Tibial artery (tissue), 4 donors: ENCODE measurements at regions of chr7 and their contacts with region 1.

Region 1: DNA sequence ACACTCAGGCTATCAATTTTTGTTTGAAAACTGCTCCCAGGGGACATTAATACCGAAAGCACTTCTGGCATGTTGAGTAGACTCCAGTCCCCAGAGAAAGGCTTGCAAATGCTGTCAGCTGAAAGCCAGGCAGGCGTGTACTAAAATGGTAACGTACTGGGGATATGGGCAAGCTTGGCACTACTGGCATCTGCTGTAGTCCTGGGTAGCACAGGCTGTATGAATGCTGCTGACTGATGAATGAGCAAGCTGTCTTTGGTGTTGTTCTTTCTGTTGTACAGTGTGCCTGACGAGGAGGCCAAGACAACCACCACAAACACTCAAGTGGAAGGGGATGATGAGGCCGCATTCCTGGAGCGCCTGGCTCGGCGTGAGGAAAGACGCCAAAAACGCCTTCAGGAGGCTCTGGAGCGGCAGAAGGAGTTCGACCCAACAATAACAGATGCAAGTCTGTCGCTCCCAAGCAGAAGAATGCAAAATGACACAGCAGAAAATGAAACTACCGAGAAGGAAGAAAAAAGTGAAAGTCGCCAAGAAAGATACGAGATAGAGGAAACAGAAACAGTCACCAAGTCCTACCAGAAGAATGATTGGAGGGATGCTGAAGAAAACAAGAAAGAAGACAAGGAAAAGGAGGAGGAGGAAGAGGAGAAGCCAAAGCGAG is 53.5 kb upstream of the AGBL3 start:
- DNase-seq: peak; percentile 51 to 91
- H3K4me3 ChIP-seq: peak overlapping the region; percentile 28 to 35
- H3K27ac ChIP-seq: peak overlapping the region; percentile 80
- H3K4me1 ChIP-seq: peaks cover 0 to 86% (median 35%) of the 10 kb centered on the region in 4 donors
- H3K27me3 ChIP-seq: no peaks in the 10 kb centered on the region
- CTCF ChIP-seq: no peak

Region 2: DNA sequence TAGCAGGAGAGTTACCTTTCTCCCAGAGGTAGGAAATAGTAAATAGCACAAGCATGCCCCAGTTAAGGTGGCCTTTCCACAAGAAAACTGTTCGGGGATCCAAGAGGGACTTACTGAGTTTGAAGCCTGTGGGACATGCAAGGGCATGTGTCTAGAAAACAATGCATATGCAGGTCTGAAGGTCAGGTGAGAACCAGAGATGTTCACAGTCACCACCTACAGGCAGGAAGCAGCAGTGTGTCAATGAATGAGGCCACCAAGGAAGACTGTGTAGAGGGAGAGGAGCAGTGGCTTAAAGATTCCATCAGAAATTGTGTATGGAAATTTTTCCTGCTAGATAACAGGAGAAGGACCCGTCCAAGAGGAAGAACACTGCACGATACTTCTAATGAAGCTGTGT is 87.4 kb before region 1 on chr7:
- intact Hi-C with region 1: loop called (anchors 10 kb)
- DNase-seq: no peak
- H3K4me3 ChIP-seq: no peak overlapping the region
- H3K27ac ChIP-seq: peak overlapping the region; percentile 83 to 89
- H3K4me1 ChIP-seq: peaks cover 0 to 100% (median 66%) of the 10 kb centered on the region in 4 donors
- H3K27me3 ChIP-seq: no peaks in the 10 kb centered on the region
- CTCF ChIP-seq: peak in 1 of 2 experiments; percentile 23

Region 3: GRCh38 chr7:134886353-134887081 is 46.3 kb before region 1 on chr7:
- intact Hi-C with region 1: loop called (anchors 10 kb)
- DNase-seq: peak in 1 of 2 donors; percentile 61
- H3K4me3 ChIP-seq: no peak overlapping the region
- H3K27ac ChIP-seq: peak overlapping the region; percentile 63 to 67
- H3K4me1 ChIP-seq: peaks cover 4 to 98% (median 49%) of the 10 kb centered on the region in 4 donors
- H3K27me3 ChIP-seq: no peaks in the 10 kb centered on the region
- CTCF ChIP-seq: no peak

Region 4: DNA sequence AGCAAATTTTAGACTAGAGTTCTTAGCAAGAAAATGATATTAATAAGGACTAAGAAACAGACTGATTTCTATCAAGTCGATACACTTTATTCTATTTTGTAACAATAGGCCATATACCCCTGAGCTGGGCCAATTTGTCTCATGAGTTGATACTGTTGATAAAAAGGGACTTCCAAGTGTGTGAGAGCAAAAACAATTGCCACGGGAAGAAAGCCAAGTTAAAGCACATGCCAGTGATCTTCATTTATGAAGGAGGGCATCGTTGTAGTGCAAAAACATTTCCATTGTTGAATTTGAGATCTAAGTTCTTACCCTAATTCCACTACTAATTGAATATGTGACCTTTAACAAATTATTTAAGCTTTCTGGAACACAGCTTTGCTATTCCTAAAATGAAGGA is 457.1 kb after region 1 on chr7:
- intact Hi-C with region 1: no loop called
- DNase-seq: no peak
- H3K4me3 ChIP-seq: no peak overlapping the region
- H3K27ac ChIP-seq: no peak overlapping the region
- H3K4me1 ChIP-seq: peaks cover 0 to 13% (median 0%) of the 10 kb centered on the region in 4 donors
- H3K27me3 ChIP-seq: no peaks in the 10 kb centered on the region
- CTCF ChIP-seq: no peak